T-cell (primary cell): ENCODE measurements at regions of chr19 and their contacts with region 1.

Region 1: GRCh38 chr19:11064831-11065303 is 24.4 kb upstream of the LDLR start:
- DNase-seq: no peak
- ATAC-seq: no peak
- H3K4me3 ChIP-seq: no peak overlapping the region
- H3K4me3 Mint-ChIP-seq: no peak overlapping the region
- H3K27ac ChIP-seq: no peak overlapping the region
- H3K27ac Mint-ChIP-seq: no peak overlapping the region
- H3K4me1 ChIP-seq: peaks cover 0 to 7% of the 10 kb centered on the region in 2 experiments
- H3K4me1 Mint-ChIP-seq: peaks cover 0 to 6% (median 2%) of the 10 kb centered on the region in 3 donors
- H3K27me3 ChIP-seq: no peaks in the 10 kb centered on the region
- H3K27me3 Mint-ChIP-seq: no peaks in the 10 kb centered on the region

Region 2: DNA sequence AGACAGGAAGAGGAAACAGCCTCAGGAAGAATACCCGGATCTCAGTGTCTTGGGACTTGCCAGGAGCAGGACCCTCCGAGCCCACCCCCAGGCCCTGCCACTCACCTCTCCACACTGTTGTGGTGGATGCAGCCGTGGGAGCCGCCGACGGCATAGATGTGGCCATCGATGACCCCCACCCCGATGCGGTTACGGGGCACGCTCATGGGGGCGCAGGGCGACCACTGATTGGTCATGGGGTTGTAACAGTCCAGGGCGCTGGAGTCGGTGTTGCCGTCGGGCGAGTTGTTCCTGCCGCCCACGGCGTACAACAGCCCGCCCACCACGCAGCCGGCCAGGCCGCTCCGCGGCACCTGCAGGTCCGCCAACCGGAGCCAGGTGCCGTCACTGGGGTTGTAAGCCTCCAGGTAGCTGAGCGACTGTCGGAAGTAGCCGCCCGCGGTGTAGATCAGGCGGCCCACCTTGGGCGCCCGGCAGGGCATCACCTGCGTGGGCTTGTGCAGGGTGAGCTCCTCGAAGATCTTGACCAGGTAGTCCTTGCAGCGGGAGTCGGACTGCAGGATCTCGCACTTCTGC is 573.3 kb before region 1 on chr19:
- CTCF ChIA-PET with region 1: no interaction called
- POLR2A ChIA-PET with region 1: interaction called in 1 of 2 experiments, 11 read pairs
- DNase-seq: no peak
- ATAC-seq: no peak
- H3K4me3 ChIP-seq: no peak overlapping the region
- H3K4me3 Mint-ChIP-seq: no peak overlapping the region
- H3K27ac ChIP-seq: no peak overlapping the region
- H3K27ac Mint-ChIP-seq: no peak overlapping the region
- H3K4me1 ChIP-seq: peaks cover 0 to 10% of the 10 kb centered on the region in 2 experiments
- H3K4me1 Mint-ChIP-seq: peaks cover 0 to 9% (median 7%) of the 10 kb centered on the region in 3 donors
- H3K27me3 ChIP-seq: no peaks in the 10 kb centered on the region
- H3K27me3 Mint-ChIP-seq: no peaks in the 10 kb centered on the region

Region 3: DNA sequence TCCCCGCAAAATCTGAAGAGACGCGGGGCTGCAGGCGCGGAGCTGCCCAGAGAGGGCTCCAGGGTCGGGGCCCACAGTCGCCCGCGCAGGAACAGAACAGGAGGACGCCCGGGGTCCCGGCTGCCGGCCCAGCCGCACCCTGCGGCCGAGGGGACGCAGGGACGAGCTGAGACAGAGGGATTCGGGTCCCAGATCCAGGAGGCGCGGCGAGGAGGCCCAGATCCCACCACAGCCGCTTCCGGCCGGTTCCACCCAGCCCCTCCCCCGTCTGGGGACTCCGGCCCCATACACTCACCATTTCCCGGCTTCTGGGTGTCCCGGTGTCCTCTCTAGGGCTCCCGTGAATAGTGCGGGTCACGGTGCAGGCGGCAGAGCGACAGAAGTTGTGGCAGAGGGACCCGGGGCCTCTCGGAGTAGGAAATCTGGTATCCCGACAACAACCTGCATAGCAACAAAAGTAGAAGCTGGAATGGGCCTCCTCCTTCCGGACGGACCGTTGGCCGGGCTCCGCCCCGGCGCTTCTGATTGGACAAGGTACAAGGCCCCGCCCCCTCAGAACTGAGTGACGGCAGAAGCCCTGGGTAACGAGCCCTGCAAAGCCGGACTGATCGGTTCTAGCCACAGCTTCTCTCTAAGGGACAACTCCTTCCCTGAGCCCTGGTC is 1075.1 kb after region 1 on chr19 and contains the start of gene ZNF20:
- CTCF ChIA-PET with region 1: no interaction called
- POLR2A ChIA-PET with region 1: interaction called in 1 of 2 experiments, 20 read pairs
- DNase-seq: peak; percentile 62 to 89 (median 79)
- ATAC-seq: peak; percentile 90 to 96 (median 94)
- H3K4me3 ChIP-seq: peak within 1 kb of the TSS; percentile 70 to 95
- H3K4me3 Mint-ChIP-seq: peak within 1 kb of the TSS; percentile 91 to 93 (median 91)
- H3K27ac ChIP-seq: peak within 1 kb of the TSS; percentile 54
- H3K27ac Mint-ChIP-seq: peak within 1 kb of the TSS; percentile 41 to 63
- H3K4me1 ChIP-seq: peaks cover 10 to 23% of the 10 kb centered on the region in 2 experiments
- H3K4me1 Mint-ChIP-seq: peaks cover 36 to 37% (median 36%) of the 10 kb centered on the region in 3 donors
- H3K27me3 ChIP-seq: no peaks in the 10 kb centered on the region
- H3K27me3 Mint-ChIP-seq: no peaks in the 10 kb centered on the region
- total RNA-seq, gene ZNF20: 2.2 to 8.8 (median 6.0) TPM in 4 of 5 donors, not detected in the other